AG04449 (cell line): ENCODE measurements at regions of chrX and their contacts with region 1.

Region 1: GRCh38 chrX:53088136-53088974 is 5.6 kb upstream of the KANTR start:
- DNase-seq: no peak
- H3K4me3 ChIP-seq: peak overlapping the region; percentile 48
- CTCF ChIP-seq: no peak

Region 2: DNA sequence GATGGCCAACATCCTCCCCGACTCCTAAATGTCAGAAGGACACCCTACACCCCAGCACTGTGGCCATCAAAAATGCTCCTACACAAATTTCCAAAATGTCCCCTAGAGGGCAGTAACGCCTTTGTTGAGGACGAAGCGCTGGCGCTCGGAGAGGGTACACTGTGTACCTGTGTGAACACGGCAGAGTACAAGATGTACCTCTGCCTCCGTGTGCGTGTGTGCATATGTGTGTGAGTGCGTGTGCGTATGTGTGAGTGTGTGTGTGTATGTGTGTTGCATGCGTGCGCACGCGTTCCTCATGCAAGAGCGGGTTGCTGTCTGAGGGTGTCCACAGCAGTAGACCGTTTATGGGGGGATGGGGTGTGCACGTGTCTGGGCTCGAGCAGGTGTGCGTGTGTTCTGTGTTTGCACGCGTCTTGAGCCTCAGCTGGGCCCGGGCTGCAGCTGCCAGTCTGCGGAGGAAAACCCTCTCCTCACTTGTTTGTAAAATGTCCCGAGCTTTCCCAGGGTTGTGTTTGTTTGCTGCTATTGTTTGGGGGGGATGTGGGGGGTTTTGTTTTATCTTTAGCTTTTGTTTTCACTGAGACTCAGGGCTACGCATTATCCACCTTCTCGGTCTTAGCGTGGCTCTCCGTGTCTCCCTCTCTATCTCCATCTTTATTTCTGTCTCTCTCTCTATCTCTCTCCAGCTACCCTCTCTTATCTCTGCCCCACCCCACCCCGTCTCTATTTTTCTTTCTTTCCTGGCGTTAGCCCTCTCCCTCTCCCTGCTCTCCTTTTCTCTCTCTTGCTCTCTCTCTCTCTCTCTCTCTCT is 16.5 kb before region 1 on chrX:
- CTCF ChIA-PET with region 1: interaction called, 23 read pairs
- POLR2A ChIA-PET with region 1: no interaction called
- DNase-seq: no peak
- H3K4me3 ChIP-seq: no peak overlapping the region
- CTCF ChIP-seq: peak; percentile 46